K562 (cell line): ENCODE measurements at regions of chr6 and their contacts with region 1.

Region 1: DNA sequence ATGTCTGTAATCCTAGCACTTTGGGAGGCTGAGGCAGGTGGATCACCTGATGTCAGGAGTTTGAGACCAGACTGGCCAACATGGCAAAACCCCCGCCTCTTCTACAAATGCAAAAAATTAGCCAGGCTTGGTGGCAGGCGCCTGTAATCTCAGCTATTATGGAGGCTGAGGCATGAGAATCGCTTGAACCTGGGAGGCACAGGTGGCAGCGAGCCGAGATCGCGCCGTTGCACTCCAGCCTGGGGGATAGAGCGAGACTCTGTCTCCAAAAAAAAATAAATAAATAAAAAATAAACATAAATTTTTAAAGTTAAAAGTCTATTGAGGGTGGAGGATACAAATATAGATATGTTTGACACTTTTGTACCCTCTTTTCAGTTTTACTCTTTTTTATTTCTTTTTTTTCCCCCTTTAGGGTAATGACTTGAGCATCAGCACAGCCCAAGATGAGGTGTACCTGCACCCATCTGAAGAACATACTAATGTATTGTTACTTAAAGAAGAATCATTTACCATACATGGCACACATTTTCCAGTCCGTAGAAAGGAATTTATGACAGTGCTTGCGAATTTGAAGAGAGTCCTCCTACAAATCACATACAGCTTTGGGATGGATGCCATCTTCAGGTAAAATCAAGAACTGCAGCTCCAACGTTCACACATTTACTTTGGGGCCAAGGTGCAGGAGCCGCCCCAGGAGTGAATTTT is 368.9 kb downstream of the LAMA2 start:
- DNase-seq: peak; percentile 7 to 32 (median 30)
- ATAC-seq: peak; percentile 61; the same call in 2 of the 3 replicates
- H3K4me3 ChIP-seq: no peak overlapping the region
- H3K27ac ChIP-seq: no peak overlapping the region
- H3K4me1 ChIP-seq: no peaks in the 10 kb centered on the region
- H3K27me3 ChIP-seq: no peaks in the 10 kb centered on the region
- CTCF ChIP-seq: peak; percentile 22 to 60 (median 49); a peak in 5 of 6 replicates
- EP300 ChIP-seq: no peak
- POLR2A ChIP-seq: no peak
- RAD21 ChIP-seq: peak; percentile 34 to 67

Region 2: GRCh38 chr6:128725271-128726233 is 526.3 kb before region 1 on chr6:
- CTCF ChIA-PET with region 1: no interaction called
- POLR2A ChIA-PET with region 1: no interaction called
- in situ Hi-C with region 1: no loop called
- intact Hi-C with region 1: loop called (anchors 2 kb)
- DNase-seq: peak; percentile 5 to 24 (median 18)
- ATAC-seq: no peak
- H3K4me3 ChIP-seq: no peak overlapping the region
- H3K27ac ChIP-seq: no peak overlapping the region
- H3K4me1 ChIP-seq: no peaks in the 10 kb centered on the region
- H3K27me3 ChIP-seq: no peaks in the 10 kb centered on the region
- CTCF ChIP-seq: peak in 2 of 3 experiments; percentile 30 to 35; a peak in 2 of 6 replicates
- EP300 ChIP-seq: no peak
- POLR2A ChIP-seq: no peak
- RAD21 ChIP-seq: peak; percentile 22 to 31; a peak in 3 of 4 replicates

Region 3: GRCh38 chr6:129331450-129332138 is 79.8 kb after region 1 on chr6:
- CTCF ChIA-PET with region 1: no interaction called
- POLR2A ChIA-PET with region 1: no interaction called
- in situ Hi-C with region 1: no loop called
- intact Hi-C with region 1: no loop called
- DNase-seq: no peak
- ATAC-seq: no peak
- H3K4me3 ChIP-seq: no peak overlapping the region
- H3K27ac ChIP-seq: no peak overlapping the region
- H3K4me1 ChIP-seq: no peaks in the 10 kb centered on the region
- H3K27me3 ChIP-seq: no peaks in the 10 kb centered on the region
- CTCF ChIP-seq: no peak
- EP300 ChIP-seq: no peak
- POLR2A ChIP-seq: no peak
- RAD21 ChIP-seq: no peak